Posterior vena cava (tissue), 2 donors: ENCODE measurements at regions of chr1 and their contacts with region 1.

Region 1: DNA sequence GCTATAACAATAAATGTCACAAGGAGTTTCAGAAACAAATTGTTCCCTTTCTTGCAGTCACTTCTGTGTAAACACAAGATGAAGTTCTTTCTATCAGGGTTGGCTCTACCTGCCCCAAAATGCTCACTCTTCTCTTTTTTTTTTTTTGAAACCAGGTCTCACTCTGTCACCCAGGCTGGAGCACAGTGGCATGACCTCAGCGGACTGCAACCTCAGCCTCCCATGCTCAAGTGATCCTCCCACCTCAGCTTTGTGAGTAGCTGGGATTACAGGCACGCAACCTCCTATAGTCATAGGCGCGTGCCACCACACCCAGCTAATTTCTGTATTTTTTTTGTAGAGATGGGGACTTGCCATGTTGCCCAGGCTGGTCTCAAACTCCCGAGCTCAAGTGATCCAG is 10.5 kb upstream of the CTNNBIP1 start:
- DNase-seq: no peak

Region 2: DNA sequence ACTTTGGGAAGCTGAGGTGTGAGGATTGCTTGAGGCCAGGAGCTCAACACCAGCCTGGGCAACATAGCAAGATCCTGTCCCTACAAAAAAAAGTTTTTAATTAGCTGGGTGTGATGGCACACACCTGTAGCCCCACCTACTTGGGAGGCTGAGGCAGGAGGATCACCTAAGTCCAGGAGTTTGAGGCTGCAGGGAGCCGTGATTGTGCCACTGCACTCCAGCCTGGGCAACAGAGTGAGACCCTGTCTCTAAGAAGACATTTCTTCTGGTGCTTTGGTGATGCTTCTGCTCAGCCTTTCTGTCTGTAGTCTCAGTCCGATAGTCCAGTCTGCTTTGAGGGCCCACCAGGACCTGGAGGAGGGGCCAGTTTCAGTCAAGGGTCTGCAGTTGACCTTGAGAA is 486.6 kb after region 1 on chr1:
- intact Hi-C with region 1: loop called in 1 of 2 experiments (anchors 2 kb)
- DNase-seq: no peak